CD4-positive, alpha-beta memory T cell (primary cell): ENCODE measurements at regions of chr2 and their contacts with region 1.

Region 1: GRCh38 chr2:68062680-68063387 is at the start of gene C1D:
- DNase-seq: peak; percentile 89 to 92 (median 90)
- H3K4me3 ChIP-seq: peak within 1 kb of the TSS; percentile 93 to 100
- H3K4me3 Mint-ChIP-seq: peak within 1 kb of the TSS; percentile 95 to 98 (median 96)
- H3K27ac ChIP-seq: peak within 1 kb of the TSS; percentile 98
- H3K27ac Mint-ChIP-seq: peak within 1 kb of the TSS; percentile 89 to 99 (median 98)
- H3K4me1 ChIP-seq: peaks cover 44% of the 10 kb centered on the region
- H3K4me1 Mint-ChIP-seq: peaks cover 32 to 52% (median 38%) of the 10 kb centered on the region in 4 donors
- H3K27me3 ChIP-seq: no peaks in the 10 kb centered on the region
- H3K27me3 Mint-ChIP-seq: peaks cover 6 to 9% of the 10 kb centered on the region in 2 donors
- total RNA-seq, gene C1D: 12.4 to 13.4 TPM

Region 2: DNA sequence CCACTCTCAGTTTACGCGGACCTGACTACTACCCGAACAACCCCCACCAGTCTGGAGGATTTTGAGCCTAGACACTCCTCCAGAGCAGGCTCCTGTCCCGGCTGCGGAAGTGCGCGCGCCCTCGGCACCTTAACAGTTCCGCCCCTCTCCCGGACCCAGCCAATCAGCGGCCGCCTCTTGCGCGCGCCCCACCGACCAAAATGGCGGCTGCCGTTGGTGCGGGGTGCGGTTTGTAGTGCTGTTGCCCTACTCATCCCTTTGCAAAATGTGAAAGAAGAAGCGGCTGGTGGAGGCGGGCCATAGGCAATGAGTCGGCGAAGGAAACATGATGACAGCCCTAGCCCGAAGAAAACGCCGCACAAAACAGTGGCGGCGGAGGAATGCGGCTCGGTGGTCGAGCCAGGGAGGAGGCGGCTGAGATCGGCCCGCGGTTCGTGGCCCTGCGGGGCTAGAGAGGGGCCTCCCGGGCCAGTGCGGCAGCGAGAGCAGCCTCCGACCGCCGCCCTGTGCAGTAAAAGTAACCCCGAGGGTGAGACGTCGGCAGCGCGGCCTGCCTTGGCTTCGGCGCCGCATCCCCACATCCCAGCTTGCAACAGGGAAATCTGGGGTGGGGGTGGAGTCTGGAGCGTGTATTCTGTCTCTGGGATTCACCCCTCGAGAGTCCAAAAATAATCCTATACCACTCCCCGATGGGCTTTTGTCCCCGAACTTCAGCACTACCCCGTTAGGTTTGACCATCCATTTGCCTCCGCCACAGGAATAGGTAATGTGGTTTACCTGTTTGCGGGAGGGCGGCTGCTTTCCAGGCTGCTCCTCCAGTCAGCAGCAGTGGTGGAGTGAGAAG is 665.5 kb before region 1 on chr2 and contains the start of gene ETAA1:
- CTCF ChIA-PET with region 1: no interaction called
- POLR2A ChIA-PET with region 1: no interaction called
- intact Hi-C with region 1: loop called (anchors 2 kb)
- DNase-seq: peak; percentile 92 to 93 (median 92)
- H3K4me3 ChIP-seq: peak within 1 kb of the TSS; percentile 74 to 84
- H3K4me3 Mint-ChIP-seq: peak within 1 kb of the TSS; percentile 94 to 99 (median 99)
- H3K27ac ChIP-seq: peak within 1 kb of the TSS; percentile 86
- H3K27ac Mint-ChIP-seq: peak within 1 kb of the TSS; percentile 93 to 100 (median 99)
- H3K4me1 ChIP-seq: peaks cover 13% of the 10 kb centered on the region
- H3K4me1 Mint-ChIP-seq: peaks cover 8 to 23% (median 12%) of the 10 kb centered on the region in 4 donors
- H3K27me3 ChIP-seq: no peaks in the 10 kb centered on the region
- H3K27me3 Mint-ChIP-seq: no peaks in the 10 kb centered on the region
- total RNA-seq, gene ETAA1: 13.6 to 15.1 TPM